ENCODE measurements at regions of chr3 and their contacts with region 1.

Region 1: DNA sequence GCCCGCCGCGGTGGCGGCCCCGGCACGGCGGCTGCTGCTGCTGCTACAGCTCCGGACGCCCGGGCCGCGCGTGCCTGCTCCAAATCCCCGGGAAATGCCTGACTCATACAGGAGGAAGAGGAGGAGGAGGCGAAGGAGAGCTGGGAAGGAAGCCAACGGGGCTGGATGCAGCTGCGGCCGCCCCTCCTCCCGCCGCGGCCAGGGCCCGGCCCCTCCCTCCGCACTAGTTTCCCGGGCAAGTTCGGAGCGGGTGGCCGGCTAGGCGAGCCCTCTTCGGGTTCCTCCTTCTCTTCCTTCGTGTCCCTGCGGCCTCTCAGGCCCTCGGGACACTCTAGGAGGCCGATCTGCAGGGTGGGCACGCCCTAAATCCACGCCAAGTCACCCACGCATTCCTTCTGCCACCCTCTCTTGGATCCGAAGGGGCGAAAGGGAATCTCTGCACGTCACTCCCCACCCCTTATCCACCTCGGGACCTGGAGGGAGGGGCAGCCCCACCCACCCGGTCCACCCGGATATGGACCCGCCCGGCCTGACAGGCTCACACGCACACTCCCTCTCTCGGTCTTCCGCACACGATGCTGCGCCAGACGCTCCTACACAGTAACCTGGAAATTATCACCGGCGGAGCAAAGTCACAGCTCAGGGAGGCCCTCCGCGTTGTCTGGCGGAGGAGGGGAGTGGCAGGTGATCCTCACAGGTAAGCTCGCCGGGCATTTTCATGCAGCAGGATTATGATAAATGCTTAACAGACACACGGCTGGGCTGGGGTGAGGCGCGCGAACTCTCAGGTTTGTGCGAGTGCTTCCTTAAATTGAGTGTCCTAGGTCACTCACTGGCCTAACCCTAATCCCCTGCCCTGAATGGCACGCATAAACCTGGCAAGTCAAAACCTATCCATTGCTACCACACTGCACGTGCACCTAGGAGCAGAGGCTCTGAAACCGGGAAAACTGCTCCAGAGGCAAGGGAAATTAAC is at the starts of genes OSBPL10 and ZNF860:
- DNase-seq: peak; percentile 88
- H3K4me3 ChIP-seq: peak within 1 kb of the TSS; percentile 60 to 73
- H3K27ac ChIP-seq: peak within 1 kb of the TSS; percentile 81 to 83
- H3K4me1 ChIP-seq: no peaks in the 10 kb centered on the region
- H3K27me3 ChIP-seq: no peaks in the 10 kb centered on the region
- CTCF ChIP-seq: peak in 2 of 4 experiments; percentile 11 to 18
- POLR2A ChIP-seq: peak; percentile 54
- total RNA-seq, gene OSBPL10: 82.8 to 127 TPM
- total RNA-seq, gene ZNF860: 3.7 to 4.4 TPM

Region 2: DNA sequence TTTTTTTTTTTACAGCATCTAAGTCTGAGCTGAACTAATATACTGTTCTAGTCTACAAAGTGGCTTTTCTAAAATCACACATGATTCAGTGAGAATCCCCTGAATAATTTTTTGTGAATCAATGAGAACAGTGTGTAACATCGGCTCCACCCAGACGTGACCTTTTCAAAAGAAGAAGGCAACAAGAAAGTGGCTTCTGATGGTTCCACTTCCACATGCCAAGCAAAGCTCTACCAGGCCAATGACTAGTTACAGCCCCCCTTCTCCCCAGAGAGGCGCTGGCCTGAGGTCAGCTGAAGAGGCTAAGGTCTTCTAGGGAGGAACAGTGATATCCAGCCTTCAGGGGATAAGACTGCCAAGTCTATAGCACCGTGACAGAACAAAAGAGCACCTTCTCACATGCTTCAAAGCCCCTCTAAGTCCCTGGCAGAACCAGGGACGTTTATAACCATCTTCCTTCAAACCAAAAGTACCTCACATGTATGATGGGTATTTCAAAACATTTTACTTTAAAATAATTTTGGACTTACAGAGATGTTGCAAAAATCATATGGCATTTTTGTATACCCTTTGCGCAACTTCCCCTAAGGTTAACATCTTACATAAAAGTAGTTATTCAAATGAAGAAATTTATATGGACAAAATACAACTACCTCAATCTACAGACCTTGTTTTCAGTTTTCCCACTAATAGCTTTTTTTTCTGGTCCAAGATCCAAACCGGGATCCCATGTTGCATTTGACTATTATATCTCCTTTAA is 178.3 kb before region 1 on chr3:
- intact Hi-C with region 1: loop called (anchors 5 kb)
- DNase-seq: no peak
- H3K4me3 ChIP-seq: no peak overlapping the region
- H3K27ac ChIP-seq: no peak overlapping the region
- H3K4me1 ChIP-seq: no peaks in the 10 kb centered on the region
- H3K27me3 ChIP-seq: no peaks in the 10 kb centered on the region
- CTCF ChIP-seq: no peak
- POLR2A ChIP-seq: no peak

Region 3: DNA sequence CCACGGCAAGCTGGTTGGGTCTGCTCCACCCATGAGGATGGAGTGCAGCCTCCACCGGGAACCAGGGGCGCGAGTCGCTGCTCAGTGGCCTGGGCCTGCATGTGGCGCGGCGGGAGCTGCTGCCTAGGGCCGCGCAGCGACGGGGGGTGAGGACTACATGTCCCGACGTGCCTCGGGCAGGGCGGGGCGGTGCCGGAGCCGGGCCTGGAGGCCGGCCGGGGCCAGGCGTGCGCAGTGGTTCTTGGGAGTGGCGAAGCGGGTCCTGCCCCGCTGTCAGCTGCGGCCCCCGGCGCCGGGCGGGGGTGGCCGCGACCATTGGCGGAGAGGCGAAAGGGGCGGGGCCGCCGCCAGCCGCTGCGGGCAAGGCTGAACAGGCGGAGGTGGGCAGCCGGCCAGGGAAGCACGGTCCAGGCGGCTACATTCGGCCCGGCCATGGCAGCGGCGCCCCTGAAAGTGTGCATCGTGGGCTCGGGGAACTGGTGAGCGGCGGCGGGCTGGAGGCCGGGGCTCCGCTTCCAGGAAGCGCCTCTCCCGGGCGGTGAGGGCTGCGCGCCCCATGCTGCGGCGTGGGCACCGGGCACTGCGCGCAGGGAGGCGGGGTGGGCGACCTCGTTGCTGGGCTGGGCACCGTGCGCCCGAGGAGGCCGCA is 124.9 kb after region 1 on chr3 and contains the start of gene GPD1L:
- intact Hi-C with region 1: loop called (anchors 5 kb)
- DNase-seq: peak; percentile 94
- H3K4me3 ChIP-seq: peak within 1 kb of the TSS; percentile 73 to 74
- H3K27ac ChIP-seq: peak within 1 kb of the TSS; percentile 69 to 77
- H3K4me1 ChIP-seq: peaks cover 16% of the 10 kb centered on the region
- H3K27me3 ChIP-seq: no peaks in the 10 kb centered on the region
- CTCF ChIP-seq: peak in 2 of 4 experiments; percentile 5 to 12
- POLR2A ChIP-seq: no peak
- total RNA-seq, gene GPD1L: 50.4 to 70.8 TPM

Measured in prostate gland (tissue), 2 donors.